Caco-2 (cell line): ENCODE measurements at regions of chr14 and their contacts with region 1.

Region 1: DNA sequence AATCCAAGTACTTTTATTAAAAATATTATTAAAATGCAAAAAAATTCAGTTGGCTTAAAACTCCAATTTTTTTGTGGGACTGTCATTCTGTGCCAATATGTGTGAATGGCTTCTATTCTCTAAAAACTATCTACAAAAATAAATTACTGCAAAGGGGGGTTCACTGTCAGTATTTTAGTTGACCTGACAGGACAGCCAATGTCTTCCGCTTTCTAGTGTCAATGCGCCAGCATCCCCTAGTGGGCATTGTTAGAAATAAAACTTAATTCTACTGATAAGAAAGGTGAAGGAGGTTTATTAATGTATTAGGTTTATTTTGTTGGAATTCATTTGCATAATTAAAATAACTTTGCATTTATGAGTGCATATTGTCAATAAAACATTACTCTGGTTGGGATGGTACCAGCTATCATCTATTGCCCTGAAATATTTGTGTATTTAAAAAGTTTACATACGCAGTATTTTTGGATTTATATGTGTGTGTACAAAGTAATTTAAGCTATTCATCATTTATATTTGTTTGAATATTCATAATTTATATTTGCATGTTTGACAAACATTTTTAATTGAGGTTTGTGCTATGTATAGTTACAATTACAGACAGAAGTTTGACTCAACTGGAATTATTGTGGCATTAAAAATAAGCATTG is 527.2 kb downstream of the FLRT2 start:
- DNase-seq: peak in 1 of 2 experiments; percentile 29
- H3K4me3 ChIP-seq: no peak overlapping the region
- H3K4me3 Mint-ChIP-seq: no peak overlapping the region
- H3K27ac Mint-ChIP-seq: no peak overlapping the region
- H3K4me1 ChIP-seq: no peaks in the 10 kb centered on the region
- H3K4me1 Mint-ChIP-seq: no peaks in the 10 kb centered on the region
- H3K27me3 ChIP-seq: no peaks in the 10 kb centered on the region
- H3K27me3 Mint-ChIP-seq: no peaks in the 10 kb centered on the region
- CTCF ChIP-seq: peak; percentile 71

Region 2: GRCh38 chr14:85867450-85867849 is 189.7 kb before region 1 on chr14:
- CTCF ChIA-PET with region 1: no interaction called
- POLR2A ChIA-PET with region 1: no interaction called
- intact Hi-C with region 1: loop called (anchors 5 kb)
- DNase-seq: peak; percentile 35 to 42
- H3K4me3 ChIP-seq: no peak overlapping the region
- H3K4me3 Mint-ChIP-seq: no peak overlapping the region
- H3K27ac Mint-ChIP-seq: no peak overlapping the region
- H3K4me1 ChIP-seq: no peaks in the 10 kb centered on the region
- H3K4me1 Mint-ChIP-seq: no peaks in the 10 kb centered on the region
- H3K27me3 ChIP-seq: no peaks in the 10 kb centered on the region
- H3K27me3 Mint-ChIP-seq: peaks cover 10% of the 10 kb centered on the region
- CTCF ChIP-seq: peak; percentile 21 to 48

Region 3: DNA sequence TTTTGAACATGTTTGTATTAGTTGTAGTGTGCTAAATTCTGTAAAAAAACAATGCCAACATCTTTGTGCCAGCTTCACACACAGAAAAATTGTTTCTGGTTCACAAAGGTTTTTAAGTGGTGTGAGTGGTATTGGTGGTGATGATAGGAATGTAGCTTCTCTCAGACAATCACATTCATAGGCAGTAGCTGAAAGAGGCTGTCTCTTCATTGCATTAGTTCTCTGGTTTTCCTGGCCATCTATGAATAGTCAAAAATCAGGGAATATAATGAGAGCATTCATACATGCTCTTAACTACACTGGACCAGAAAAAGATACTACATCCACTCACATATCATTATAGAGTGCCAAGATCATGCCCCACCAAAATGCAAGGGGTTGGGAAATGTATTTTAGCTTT is 93.7 kb before region 1 on chr14:
- CTCF ChIA-PET with region 1: no interaction called
- POLR2A ChIA-PET with region 1: no interaction called
- intact Hi-C with region 1: no loop called
- DNase-seq: no peak
- H3K4me3 ChIP-seq: no peak overlapping the region
- H3K4me3 Mint-ChIP-seq: no peak overlapping the region
- H3K27ac Mint-ChIP-seq: no peak overlapping the region
- H3K4me1 ChIP-seq: no peaks in the 10 kb centered on the region
- H3K4me1 Mint-ChIP-seq: no peaks in the 10 kb centered on the region
- H3K27me3 ChIP-seq: no peaks in the 10 kb centered on the region
- H3K27me3 Mint-ChIP-seq: peaks cover 5% of the 10 kb centered on the region
- CTCF ChIP-seq: no peak